ENCODE measurements at regions of chr6 and their contacts with region 1.

Region 1: DNA sequence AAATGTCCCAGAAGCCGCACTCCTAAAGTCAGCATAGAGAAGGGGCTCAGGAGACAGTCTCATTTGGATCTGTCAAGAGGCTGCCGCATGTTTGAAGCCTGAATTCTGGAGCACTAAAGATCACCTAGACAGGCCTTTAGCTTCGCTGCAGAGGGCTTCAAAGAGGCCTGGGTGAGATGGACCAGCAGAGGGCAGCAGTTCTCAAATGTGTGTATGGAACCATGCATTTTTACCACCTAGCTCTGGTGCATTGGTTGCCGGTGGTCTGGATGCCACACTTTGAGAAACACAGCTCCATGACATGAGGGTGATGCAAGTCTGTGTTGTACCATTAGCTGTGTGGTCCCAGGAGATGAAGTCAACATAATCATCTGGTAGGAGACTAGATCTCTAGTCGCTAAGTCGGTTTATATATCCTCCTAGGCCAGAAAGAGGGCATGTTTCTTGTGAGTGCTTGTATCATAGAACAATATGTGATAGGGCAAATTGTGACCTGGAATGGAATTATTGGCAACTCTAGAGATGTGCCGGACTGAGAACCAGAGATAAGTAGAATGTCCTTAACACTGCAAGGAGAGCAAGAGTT is 64.8 kb downstream of the KIAA0319 start:
- DNase-seq: no peak

Region 2: GRCh38 chr6:24188578-24189080 is 392.5 kb before region 1 on chr6:
- intact Hi-C with region 1: no loop called
- DNase-seq: no peak

Region 3: GRCh38 chr6:24537771-24538385 is 43.3 kb before region 1 on chr6:
- intact Hi-C with region 1: no loop called
- DNase-seq: no peak

Region 4: DNA sequence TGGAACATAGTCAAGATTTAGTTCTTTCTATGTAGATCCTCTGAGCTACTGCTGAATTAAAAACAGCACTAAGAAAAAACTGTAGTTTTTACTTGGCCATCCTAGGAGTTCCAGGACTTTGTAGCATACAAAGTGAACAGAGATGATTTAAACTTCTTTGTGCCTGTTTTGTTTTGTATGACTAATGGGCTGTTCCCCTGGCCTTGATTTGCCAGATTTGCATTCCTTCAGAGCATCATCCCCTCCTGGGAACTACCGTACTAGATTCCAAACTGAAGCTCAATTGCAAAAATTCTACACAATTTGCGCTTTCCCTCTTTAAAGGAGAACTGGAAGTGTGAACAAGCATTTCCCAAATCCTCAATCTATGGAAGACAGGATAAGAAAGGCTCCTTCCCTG is 108.8 kb after region 1 on chr6:
- intact Hi-C with region 1: loop called (anchors 1 kb)
- DNase-seq: no peak

Region 5: DNA sequence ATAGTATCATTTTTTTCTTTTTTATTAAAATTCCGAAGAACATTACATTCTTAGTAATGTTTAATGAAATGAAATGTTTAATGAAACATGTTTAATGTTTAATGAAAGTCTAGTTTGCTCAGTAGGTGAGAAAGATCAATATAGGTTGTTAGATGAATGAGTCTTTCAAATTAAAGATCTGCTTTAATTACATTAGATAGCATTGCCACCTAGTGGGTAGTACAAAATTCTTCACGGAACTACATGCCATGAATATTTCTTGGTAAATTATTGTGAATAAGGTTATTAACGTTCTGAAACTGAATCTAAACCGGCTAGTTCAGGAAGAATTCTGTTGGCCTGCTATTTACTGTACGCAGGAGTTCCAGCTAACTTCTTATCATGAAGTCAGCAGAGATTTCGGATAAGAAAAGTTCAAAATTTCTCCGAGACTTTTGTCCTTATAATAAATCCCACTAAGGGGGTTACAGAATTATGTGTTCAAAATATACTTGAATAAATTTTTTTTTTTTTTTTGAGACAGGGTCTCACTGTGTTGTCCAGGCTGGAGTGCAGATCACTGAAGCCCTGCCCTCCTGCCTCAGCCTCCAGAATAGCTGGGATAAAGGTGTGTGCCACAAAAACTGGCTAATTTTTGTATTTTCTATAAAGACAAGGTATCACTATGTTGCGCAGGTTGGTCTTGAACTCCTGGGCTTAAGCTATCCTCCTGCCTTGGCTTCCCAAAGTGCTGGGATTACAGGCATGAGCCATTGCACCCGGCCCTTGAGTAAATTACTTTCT is 185.7 kb after region 1 on chr6:
- intact Hi-C with region 1: loop called (anchors 5 kb)
- DNase-seq: no peak

Measured in cardiac septum (tissue), 1 donor.